ENCODE measurements at regions of chr12 and their contacts with region 1.

Region 1: DNA sequence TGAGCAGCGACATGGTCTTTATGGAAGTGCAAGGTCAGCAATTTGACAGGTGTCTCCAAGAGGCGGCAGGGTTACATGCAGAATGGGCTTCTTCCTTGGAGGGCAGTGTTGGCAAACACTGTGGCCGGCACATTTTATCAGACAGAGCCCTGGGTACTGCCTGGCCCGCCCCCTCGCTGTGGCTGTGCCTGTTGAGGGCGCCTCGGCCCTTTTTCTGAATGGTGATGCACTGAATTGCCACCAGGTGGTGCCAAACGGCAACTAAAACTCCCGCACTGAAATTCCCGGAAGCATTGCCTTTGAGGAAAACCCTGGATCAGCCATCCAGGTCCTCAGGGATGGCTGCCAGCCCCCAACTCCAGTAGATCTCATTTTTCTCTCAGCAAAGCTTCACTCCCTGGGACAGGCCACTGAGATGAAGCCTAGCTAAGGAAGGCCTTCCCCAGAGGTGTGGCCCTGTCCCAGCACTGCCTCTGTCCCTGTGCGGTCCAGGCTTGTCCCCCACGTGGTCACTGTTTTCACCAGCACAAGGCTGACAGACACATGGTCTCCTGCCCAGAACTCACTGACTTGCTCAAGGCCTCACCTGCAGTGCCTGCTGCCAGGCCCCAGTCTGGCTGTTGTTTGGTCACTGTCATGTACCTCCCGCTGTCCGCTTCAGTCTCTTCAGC is 73.6 kb downstream of the TESC start:
- DNase-seq: peak in 9 of 10 donors; percentile 52 to 83 (median 74)
- H3K4me3 ChIP-seq: no peak overlapping the region
- H3K27ac ChIP-seq: peak overlapping the region in 43 of 59 donors; percentile 7 to 79 (median 52)
- H3K27me3 ChIP-seq: no peaks in the 10 kb centered on the region
- CTCF ChIP-seq: peak; percentile 93 to 100 (median 98)

Region 2: GRCh38 chr12:116703214-116703795 is 322.3 kb before region 1 on chr12:
- intact Hi-C with region 1: loop called in 1 of 2 experiments (anchors 10 kb)
- DNase-seq: peak; percentile 64 to 83 (median 70)
- H3K4me3 ChIP-seq: peak overlapping the region in 1 of 59 donors; percentile 9
- H3K27ac ChIP-seq: peak overlapping the region in 6 of 59 donors; percentile 6 to 68 (median 20)
- H3K27me3 ChIP-seq: no peaks in the 10 kb centered on the region
- CTCF ChIP-seq: peak; percentile 83 to 98 (median 92)

Region 3: GRCh38 chr12:117119592-117120198 is 94.1 kb after region 1 on chr12:
- intact Hi-C with region 1: loop called (anchors 1 kb)
- DNase-seq: peak in 1 of 10 donors; percentile 50
- H3K4me3 ChIP-seq: peak overlapping the region in 1 of 59 donors; percentile 11
- H3K27ac ChIP-seq: peak overlapping the region in 45 of 59 donors; percentile 0 to 82 (median 59)
- H3K27me3 ChIP-seq: no peaks in the 10 kb centered on the region
- CTCF ChIP-seq: peak; percentile 20 to 76 (median 59)

Region 4: GRCh38 chr12:117151195-117152031 is 125.8 kb after region 1 on chr12:
- intact Hi-C with region 1: loop called in 1 of 2 experiments (anchors 2 kb)
- DNase-seq: peak; percentile 52 to 70 (median 64)
- H3K4me3 ChIP-seq: no peak overlapping the region
- H3K27ac ChIP-seq: peak overlapping the region in 3 of 59 donors; percentile 2 to 32 (median 24)
- H3K27me3 ChIP-seq: no peaks in the 10 kb centered on the region
- CTCF ChIP-seq: peak; percentile 43 to 78 (median 69)